ENCODE measurements at regions of chrX and their contacts with region 1.

Region 1: DNA sequence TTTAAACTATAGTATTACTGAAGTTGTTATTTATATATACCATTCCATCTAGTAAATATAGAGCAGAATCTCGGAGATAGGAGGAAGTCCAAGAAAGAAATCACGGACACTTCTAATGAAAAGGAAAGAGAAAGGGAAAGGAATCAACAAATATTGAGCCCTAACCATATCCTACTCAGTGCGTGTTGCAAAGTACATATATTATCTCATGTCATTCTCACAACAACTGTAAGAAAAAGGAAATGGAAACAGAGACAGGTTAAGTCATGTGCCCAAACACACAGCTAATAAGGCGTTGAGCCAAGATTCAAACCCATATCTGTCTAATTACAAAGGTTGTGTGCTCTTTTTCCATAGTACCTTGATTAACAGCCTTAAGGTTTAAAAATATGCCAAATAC is 16.0 kb downstream of the HTR2C start:
- DNase-seq: no peak
- ATAC-seq: no peak
- H3K4me3 Mint-ChIP-seq: no peak overlapping the region
- H3K27ac Mint-ChIP-seq: no peak overlapping the region
- H3K4me1 Mint-ChIP-seq: no peaks in the 10 kb centered on the region
- H3K27me3 Mint-ChIP-seq: no peaks in the 10 kb centered on the region
- CTCF ChIP-seq: no peak

Region 2: DNA sequence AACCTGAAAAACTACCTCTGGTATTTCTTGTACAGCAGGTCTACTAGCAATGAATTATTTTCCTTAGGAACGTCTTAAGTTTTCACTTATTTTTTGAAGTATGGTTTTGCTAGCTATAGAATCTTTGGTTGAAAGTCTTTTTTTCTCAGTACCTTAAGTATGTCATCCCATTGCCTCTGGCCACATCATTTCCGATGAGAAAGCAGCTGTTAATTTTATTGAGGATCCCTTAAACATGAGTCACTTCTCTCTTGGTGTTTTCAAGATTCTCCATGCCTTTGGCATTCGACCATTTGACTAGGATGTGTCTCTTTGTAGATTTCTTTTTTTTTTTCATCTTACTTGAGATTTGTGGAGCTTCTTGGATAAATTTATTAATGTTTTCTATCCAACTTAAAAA is 955.5 kb before region 1 on chrX:
- CTCF ChIA-PET with region 1: no interaction called
- POLR2A ChIA-PET with region 1: no interaction called
- intact Hi-C with region 1: no loop called
- DNase-seq: no peak
- ATAC-seq: no peak
- H3K4me3 Mint-ChIP-seq: no peak overlapping the region
- H3K27ac Mint-ChIP-seq: no peak overlapping the region
- H3K4me1 Mint-ChIP-seq: no peaks in the 10 kb centered on the region
- H3K27me3 Mint-ChIP-seq: no peaks in the 10 kb centered on the region
- CTCF ChIP-seq: no peak

Region 3: DNA sequence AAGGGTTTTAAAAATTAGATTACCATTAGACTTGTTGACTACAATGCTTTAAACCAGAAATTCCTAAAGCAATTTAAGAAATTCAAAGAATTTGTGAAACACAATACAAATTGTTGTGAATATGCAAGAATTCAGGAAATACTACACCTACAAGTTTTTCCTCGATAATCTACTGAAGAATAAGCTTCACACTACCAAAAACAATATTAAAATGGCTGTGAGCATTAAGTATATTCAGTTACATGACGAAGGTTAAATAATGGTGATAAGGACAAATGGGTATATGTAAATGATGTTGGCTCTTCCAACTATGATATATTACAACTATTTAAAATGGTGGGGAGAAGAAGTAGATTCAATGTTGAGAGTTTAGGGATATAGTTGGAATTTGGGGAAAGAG is 127.1 kb before region 1 on chrX:
- CTCF ChIA-PET with region 1: no interaction called
- POLR2A ChIA-PET with region 1: no interaction called
- intact Hi-C with region 1: loop called (anchors 5 kb)
- DNase-seq: no peak
- ATAC-seq: no peak
- H3K4me3 Mint-ChIP-seq: no peak overlapping the region
- H3K27ac Mint-ChIP-seq: no peak overlapping the region
- H3K4me1 Mint-ChIP-seq: no peaks in the 10 kb centered on the region
- H3K27me3 Mint-ChIP-seq: no peaks in the 10 kb centered on the region
- CTCF ChIP-seq: no peak

Measured in activated B cell treated with CpG ODN at 0.5 μM for 24 hours (primary cell).